Gastrocnemius medialis (tissue), 4 donors: ENCODE measurements at regions of chr1 and their contacts with region 1.

Region 1: DNA sequence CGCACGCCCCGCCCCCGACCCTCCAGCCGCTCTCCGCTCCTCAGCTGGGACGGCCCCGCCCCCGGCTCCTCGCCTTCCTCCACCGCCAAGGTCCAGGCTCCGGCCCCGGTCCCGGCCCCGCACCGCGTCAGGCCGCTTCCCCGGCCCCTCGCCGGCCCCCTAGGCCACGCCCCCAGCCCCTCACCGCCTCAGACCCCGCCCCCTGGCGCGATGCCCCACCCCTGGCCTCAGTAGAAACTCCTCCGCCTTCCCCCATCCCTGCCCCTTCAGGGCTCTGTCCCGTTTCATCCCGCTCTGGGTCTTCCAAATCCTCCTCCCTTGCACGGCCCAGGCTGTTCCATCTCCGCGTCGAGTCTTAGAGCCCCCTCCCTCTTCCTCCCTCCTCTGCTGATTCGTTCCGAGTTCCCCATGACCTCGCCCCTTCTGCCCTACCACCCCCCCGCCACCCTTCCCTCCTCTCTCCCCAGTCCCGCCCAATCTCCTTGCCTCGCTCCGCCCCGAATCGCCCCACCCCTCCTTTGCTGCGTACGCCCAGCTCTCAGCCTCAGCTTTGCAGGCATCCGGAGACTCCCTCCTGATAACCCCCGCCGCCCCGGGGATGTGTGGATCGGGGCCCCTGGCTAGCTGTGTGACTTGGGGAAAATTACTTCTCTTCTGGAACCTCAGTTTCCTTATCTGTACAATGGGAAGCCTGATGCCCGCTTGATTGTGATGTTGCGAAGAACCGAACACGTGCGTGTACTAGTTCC is 448 bp upstream of the ASAP3 start:
- DNase-seq: peak; percentile 90 to 92
- ATAC-seq: peak; percentile 82 to 86
- H3K4me3 ChIP-seq: peak overlapping the region; percentile 80 to 89 (median 83)
- H3K27ac ChIP-seq: peak overlapping the region; percentile 88 to 97 (median 93)
- H3K4me1 ChIP-seq: peaks cover 37 to 40% of the 10 kb centered on the region in 2 donors
- H3K27me3 ChIP-seq: no peaks in the 10 kb centered on the region
- CTCF ChIP-seq: no peak
- POLR2A ChIP-seq: no peak

Region 2: GRCh38 chr1:23344111-23344986 is 140.1 kb before region 1 on chr1 and contains the start of gene HNRNPR:
- in situ Hi-C with region 1: no loop called
- intact Hi-C with region 1: loop called (anchors 5 kb)
- DNase-seq: peak; percentile 100
- ATAC-seq: peak; percentile 97 to 99
- H3K4me3 ChIP-seq: peak within 1 kb of the TSS; percentile 67 to 86 (median 76)
- H3K27ac ChIP-seq: peak within 1 kb of the TSS; percentile 88 to 96 (median 95)
- H3K4me1 ChIP-seq: peaks cover 37 to 40% of the 10 kb centered on the region in 2 donors
- H3K27me3 ChIP-seq: no peaks in the 10 kb centered on the region
- CTCF ChIP-seq: peak in 2 of 5 experiments; percentile 29 to 37
- POLR2A ChIP-seq: peak; percentile 91 to 93
- total RNA-seq, gene HNRNPR: 36.5 to 56.3 (median 44.5) TPM

Region 3: DNA sequence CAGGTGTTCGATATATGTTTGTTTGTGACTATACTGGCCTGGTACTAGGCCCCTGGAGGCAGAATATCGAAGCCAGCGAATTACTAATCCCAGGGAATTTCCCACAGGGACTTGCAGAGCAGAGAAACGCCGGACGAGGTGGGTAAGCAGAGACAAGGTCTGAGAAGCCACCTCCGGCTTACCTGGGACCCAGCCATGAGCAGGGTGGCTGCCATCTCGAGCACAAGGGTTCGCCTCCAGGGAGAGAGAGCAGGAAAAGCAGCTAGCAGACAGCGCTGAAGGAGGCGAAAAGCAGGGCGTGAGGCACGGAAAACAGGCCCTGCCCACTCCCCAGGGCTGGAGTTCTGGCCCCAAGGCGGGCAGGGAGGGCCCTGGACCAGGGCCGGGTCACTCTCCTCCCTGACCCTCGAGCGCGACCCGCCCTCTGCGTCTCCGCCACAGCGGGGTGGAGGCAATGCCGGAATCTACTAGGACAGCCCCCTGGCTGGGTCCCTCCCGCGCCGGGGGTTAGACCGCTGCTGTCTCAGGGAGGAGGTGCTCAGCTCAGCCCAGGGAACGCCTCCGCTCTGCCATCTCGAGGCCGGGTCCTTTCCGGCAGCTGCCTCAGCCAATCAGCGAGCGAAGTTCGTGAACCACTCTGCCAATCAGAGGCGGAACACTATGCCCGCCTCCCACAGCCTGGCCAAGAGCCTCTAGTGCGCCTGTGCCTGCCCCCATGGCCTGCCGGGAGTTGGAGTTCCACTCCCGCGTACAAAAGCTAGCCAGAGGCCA is 116.5 kb before region 1 on chr1:
- in situ Hi-C with region 1: no loop called
- intact Hi-C with region 1: loop called (anchors 2 kb)
- DNase-seq: peak; percentile 99
- ATAC-seq: peak; percentile 84
- H3K4me3 ChIP-seq: peak overlapping the region; percentile 82 to 99 (median 92)
- H3K27ac ChIP-seq: peak overlapping the region; percentile 99 to 100 (median 100)
- H3K4me1 ChIP-seq: peaks cover 44 to 47% of the 10 kb centered on the region in 2 donors
- H3K27me3 ChIP-seq: no peaks in the 10 kb centered on the region
- CTCF ChIP-seq: no peak
- POLR2A ChIP-seq: peak; percentile 81 to 82

Region 4: GRCh38 chr1:23403735-23404486 is 80.5 kb before region 1 on chr1:
- in situ Hi-C with region 1: no loop called
- intact Hi-C with region 1: loop called (anchors 5 kb)
- DNase-seq: peak; percentile 62 to 79
- ATAC-seq: peak; percentile 53 to 54
- H3K4me3 ChIP-seq: peak overlapping the region in 1 of 4 donors; percentile 22
- H3K27ac ChIP-seq: peak overlapping the region; percentile 79 to 85 (median 84)
- H3K4me1 ChIP-seq: peaks cover 27 to 59% of the 10 kb centered on the region in 2 donors
- H3K27me3 ChIP-seq: no peaks in the 10 kb centered on the region
- CTCF ChIP-seq: peak; percentile 76 to 98 (median 91)
- POLR2A ChIP-seq: no peak

Region 5: DNA sequence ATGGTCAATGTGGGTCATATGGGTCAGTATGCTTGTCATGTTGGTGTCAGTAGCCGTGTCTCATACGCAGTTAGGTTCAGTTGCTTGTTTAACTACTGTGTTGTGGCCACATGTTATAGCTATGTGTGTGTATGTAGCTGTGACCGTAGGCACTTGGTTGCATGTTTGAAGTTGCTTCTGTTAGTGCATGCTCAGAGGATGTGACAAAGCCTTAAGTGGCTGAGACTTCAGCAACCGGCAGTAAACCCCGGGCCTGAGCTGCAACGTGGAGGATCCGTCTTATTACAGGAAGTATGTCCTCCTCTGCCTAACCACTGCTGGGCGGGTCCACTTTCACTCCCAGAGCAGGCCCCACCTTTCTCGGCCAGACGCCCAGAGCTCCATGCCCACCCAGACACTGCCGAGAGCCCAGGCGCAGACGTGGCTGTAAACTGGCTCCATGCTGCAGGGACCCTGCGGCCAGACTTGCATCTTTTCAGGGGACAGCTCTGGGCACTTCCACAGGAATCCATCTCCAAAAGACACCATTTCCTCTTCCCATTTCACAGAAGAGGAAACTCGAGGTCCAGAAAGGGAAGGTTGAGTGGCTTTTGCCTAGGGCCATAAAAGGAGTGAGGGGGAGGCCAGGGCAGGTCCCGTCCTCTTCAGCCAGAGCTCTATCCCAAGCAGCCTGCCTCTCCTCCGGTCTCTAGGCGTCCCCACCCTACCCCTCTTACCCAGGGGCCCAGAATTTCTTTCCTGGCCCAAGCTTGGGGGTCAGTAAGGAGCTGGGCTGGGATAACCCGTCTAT is 62.0 kb before region 1 on chr1:
- in situ Hi-C with region 1: no loop called
- intact Hi-C with region 1: loop called (anchors 2 kb)
- DNase-seq: peak; percentile 33 to 65
- ATAC-seq: no peak
- H3K4me3 ChIP-seq: peak overlapping the region in 2 of 4 donors; percentile 68 to 72
- H3K27ac ChIP-seq: peak overlapping the region; percentile 93 to 96 (median 94)
- H3K4me1 ChIP-seq: peaks cover 66 to 79% of the 10 kb centered on the region in 2 donors
- H3K27me3 ChIP-seq: no peaks in the 10 kb centered on the region
- CTCF ChIP-seq: no peak
- POLR2A ChIP-seq: no peak

Region 6: DNA sequence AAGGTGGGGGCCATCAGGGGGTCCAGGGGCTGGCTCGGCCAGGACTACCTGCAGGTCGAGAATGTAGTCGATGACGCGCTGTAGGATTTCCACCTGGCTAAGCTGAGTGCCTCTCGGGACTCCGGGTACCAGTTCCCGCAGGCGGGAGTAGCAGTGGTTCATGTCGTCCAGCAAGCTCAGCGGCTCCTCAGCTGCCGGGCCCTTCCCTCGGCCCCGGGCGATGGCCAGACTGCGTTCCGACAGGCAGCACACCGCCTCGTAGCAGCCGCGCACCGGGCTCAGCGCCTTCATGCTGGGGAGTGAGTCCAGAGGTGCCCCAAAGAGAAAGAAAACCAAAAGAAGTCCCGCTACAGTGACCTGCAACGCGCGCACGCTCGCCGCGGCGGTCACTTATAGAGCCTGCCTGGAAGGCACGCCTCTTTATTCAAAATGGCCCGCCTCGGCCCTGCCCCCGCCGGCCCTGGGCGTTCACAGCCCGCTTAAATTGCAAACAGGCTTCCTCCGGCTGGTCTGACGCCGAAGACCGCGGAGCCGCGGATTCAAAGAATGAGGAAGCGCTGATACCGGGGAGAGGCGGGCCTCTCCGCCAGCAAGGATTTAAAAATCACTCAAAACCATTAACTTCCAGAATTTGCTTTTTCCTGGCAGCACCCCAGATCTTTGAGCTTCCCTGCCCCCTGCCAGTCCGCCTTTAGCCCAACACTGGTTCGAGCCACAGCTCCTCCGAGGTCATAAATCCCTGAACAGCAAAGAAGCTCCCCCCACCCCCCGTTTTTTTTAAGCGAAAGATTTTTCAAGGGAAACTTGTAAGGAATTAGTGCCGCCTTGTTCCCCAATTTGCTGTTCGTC is 74.9 kb after region 1 on chr1 and contains the start of gene ID3:
- in situ Hi-C with region 1: no loop called
- intact Hi-C with region 1: loop called (anchors 5 kb)
- DNase-seq: peak; percentile 86 to 96
- ATAC-seq: peak; percentile 67 to 71
- H3K4me3 ChIP-seq: peak within 1 kb of the TSS; percentile 54 to 89 (median 70)
- H3K27ac ChIP-seq: peak within 1 kb of the TSS; percentile 88 to 90 (median 89)
- H3K4me1 ChIP-seq: peaks cover 48 to 66% of the 10 kb centered on the region in 2 donors
- H3K27me3 ChIP-seq: no peaks in the 10 kb centered on the region
- CTCF ChIP-seq: no peak
- POLR2A ChIP-seq: peak; percentile 94 to 99
- total RNA-seq, gene ID3: 67.9 to 124 (median 83.0) TPM